ENCODE measurements at regions of chr16 and their contacts with region 1.

Region 1: GRCh38 chr16:50806099-50807062 is 64.5 kb downstream of the CYLD start:
- DNase-seq: peak; percentile 76 to 93 (median 81)
- ATAC-seq: peak; percentile 94
- H3K4me3 ChIP-seq: peak overlapping the region; percentile 37
- H3K4me3 Mint-ChIP-seq: peak overlapping the region; percentile 80
- H3K27ac ChIP-seq: no peak overlapping the region
- H3K27ac Mint-ChIP-seq: peak overlapping the region; percentile 83
- H3K4me1 ChIP-seq: peaks cover 15% of the 10 kb centered on the region
- H3K4me1 Mint-ChIP-seq: peaks cover 13% of the 10 kb centered on the region
- H3K27me3 ChIP-seq: no peaks in the 10 kb centered on the region
- H3K27me3 Mint-ChIP-seq: no peaks in the 10 kb centered on the region
- CTCF ChIP-seq: peak; percentile 99

Region 2: GRCh38 chr16:50065624-50066481 is 740.5 kb before region 1 on chr16 and contains the start of gene HEATR3:
- CTCF ChIA-PET with region 1: interaction called, 7 read pairs
- POLR2A ChIA-PET with region 1: interaction called, 5 read pairs
- intact Hi-C with region 1: loop called in 1 of 2 experiments (anchors 1 kb)
- DNase-seq: peak; percentile 89 to 98 (median 95)
- ATAC-seq: peak; percentile 83
- H3K4me3 ChIP-seq: peak within 1 kb of the TSS; percentile 69
- H3K4me3 Mint-ChIP-seq: peak within 1 kb of the TSS; percentile 99
- H3K27ac ChIP-seq: peak within 1 kb of the TSS; percentile 69 to 85
- H3K27ac Mint-ChIP-seq: peak within 1 kb of the TSS; percentile 83
- H3K4me1 ChIP-seq: peaks cover 25% of the 10 kb centered on the region
- H3K4me1 Mint-ChIP-seq: peaks cover 53% of the 10 kb centered on the region
- H3K27me3 ChIP-seq: no peaks in the 10 kb centered on the region
- H3K27me3 Mint-ChIP-seq: no peaks in the 10 kb centered on the region
- CTCF ChIP-seq: no peak
- total RNA-seq, gene HEATR3: 10.1 to 10.6 TPM

Region 3: GRCh38 chr16:50326949-50327402 is 479.4 kb before region 1 on chr16:
- CTCF ChIA-PET with region 1: interaction called, 8 read pairs
- POLR2A ChIA-PET with region 1: interaction called, 6 read pairs
- intact Hi-C with region 1: loop called in 1 of 2 experiments (anchors 2 kb)
- DNase-seq: peak; percentile 39 to 93 (median 62)
- ATAC-seq: peak; percentile 92
- H3K4me3 ChIP-seq: no peak overlapping the region
- H3K4me3 Mint-ChIP-seq: no peak overlapping the region
- H3K27ac ChIP-seq: peak overlapping the region in 1 of 2 donors; percentile 20
- H3K27ac Mint-ChIP-seq: peak overlapping the region; percentile 84
- H3K4me1 ChIP-seq: peaks cover 38% of the 10 kb centered on the region
- H3K4me1 Mint-ChIP-seq: peaks cover 64% of the 10 kb centered on the region
- H3K27me3 ChIP-seq: no peaks in the 10 kb centered on the region
- H3K27me3 Mint-ChIP-seq: no peaks in the 10 kb centered on the region
- CTCF ChIP-seq: peak; percentile 83

Region 4: DNA sequence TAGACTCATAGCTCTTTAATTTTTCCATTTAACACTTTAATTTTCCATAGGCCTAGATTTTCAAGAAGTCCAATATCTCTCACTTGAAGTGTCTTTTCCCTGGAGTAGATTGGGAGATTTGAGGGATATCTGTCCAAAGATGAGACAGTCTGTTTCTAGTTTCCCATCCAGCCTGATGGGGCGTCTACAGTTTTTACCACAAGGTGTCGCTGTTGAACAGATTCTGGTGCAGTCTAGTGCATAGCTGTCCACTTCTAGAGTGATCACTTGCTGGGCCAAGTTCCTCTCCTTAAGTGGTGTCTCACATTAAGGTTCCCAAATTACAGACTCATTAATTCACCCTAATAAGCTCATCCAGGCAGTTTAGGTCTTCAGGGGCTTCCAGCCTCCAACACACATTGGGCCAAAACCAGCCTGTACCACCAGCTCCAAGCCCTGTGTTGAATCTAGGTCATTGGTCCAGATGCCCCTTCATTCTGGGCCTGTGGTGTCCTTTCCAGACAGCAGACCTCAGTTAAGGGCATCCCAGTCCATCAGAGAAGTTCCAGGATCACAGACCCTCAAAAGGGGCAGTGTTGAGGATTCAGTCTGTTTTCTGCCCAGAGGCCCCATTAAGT is 134.6 kb before region 1 on chr16:
- CTCF ChIA-PET with region 1: interaction called, 62 read pairs
- POLR2A ChIA-PET with region 1: interaction called, 11 read pairs
- intact Hi-C with region 1: loop called (anchors 1 to 2 kb)
- DNase-seq: peak in 11 of 14 experiments; percentile 26 to 76 (median 47)
- ATAC-seq: peak; percentile 25
- H3K4me3 ChIP-seq: no peak overlapping the region
- H3K4me3 Mint-ChIP-seq: peak overlapping the region; percentile 39
- H3K27ac ChIP-seq: no peak overlapping the region
- H3K27ac Mint-ChIP-seq: peak overlapping the region; percentile 74
- H3K4me1 ChIP-seq: peaks cover 31% of the 10 kb centered on the region
- H3K4me1 Mint-ChIP-seq: peaks cover 42% of the 10 kb centered on the region
- H3K27me3 ChIP-seq: no peaks in the 10 kb centered on the region
- H3K27me3 Mint-ChIP-seq: no peaks in the 10 kb centered on the region
- CTCF ChIP-seq: peak; percentile 63

Region 5: DNA sequence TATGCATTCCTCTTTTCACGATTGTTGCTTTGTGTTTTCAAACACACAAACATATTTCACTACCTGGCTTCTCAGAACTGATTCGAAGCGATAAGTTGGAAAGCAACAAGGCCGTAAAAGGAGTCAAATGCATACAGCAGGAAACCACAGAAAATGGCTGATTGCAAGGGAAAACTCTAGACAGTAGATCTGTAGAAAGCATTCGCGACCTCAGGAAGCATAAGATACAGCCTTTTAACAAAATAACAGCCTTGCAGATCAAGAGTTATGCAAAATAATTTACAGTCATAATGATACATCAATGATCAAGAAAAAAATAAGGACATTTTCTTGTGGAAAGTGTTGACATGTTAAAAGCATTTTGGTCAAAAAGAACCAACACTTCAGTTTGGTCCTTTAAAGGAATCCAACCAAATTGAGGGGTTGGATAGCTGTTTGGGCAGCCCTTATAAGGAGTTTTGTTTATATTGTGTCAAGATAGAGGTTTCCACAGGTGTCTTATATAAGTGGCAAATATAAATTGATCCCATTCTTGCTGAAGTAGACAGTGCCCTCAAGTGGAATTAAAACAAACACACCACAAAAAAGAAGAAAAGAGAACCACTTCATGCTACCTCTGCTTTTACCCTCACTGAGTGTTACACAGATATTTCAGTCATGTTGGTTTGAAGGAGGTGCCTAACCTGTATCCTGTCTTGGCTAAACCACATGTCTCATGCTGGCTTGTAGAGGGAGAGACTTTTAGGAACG is 59.0 kb before region 1 on chr16:
- CTCF ChIA-PET with region 1: interaction called, 15 read pairs
- POLR2A ChIA-PET with region 1: interaction called, 9 read pairs
- intact Hi-C with region 1: loop called in 1 of 2 experiments (anchors 2 kb)
- DNase-seq: peak in 5 of 14 experiments; percentile 14 to 86 (median 78)
- ATAC-seq: peak; percentile 72
- H3K4me3 ChIP-seq: peak overlapping the region; percentile 80
- H3K4me3 Mint-ChIP-seq: peak overlapping the region; percentile 86
- H3K27ac ChIP-seq: peak overlapping the region; percentile 38 to 66
- H3K27ac Mint-ChIP-seq: peak overlapping the region; percentile 87
- H3K4me1 ChIP-seq: peaks cover 23% of the 10 kb centered on the region
- H3K4me1 Mint-ChIP-seq: peaks cover 80% of the 10 kb centered on the region
- H3K27me3 ChIP-seq: no peaks in the 10 kb centered on the region
- H3K27me3 Mint-ChIP-seq: no peaks in the 10 kb centered on the region
- CTCF ChIP-seq: peak; percentile 72

Region 6: DNA sequence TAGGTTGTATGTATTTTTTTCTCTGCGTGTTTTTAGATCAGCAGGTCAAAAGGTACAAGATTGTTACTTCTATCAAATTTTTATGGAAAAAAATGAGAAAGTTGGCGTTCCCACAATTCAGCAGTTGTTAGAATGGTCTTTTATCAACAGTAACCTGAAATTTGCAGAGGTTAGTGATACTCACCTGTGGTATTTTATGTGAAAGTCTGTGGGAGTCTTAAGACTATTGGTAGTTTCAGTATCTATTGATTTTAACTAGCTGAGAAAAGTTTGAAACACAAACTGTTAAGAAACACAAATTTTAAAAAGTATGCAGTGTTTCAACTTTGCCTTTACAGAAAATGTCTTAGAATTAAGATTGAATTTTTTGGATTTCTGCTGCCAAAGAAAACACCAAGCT is 14.9 kb before region 1 on chr16:
- CTCF ChIA-PET with region 1: interaction called, 33 read pairs
- POLR2A ChIA-PET with region 1: no interaction called
- intact Hi-C with region 1: no loop called
- DNase-seq: no peak
- ATAC-seq: no peak
- H3K4me3 ChIP-seq: no peak overlapping the region
- H3K4me3 Mint-ChIP-seq: no peak overlapping the region
- H3K27ac ChIP-seq: no peak overlapping the region
- H3K27ac Mint-ChIP-seq: peak overlapping the region; percentile 17
- H3K4me1 ChIP-seq: no peaks in the 10 kb centered on the region
- H3K4me1 Mint-ChIP-seq: peaks cover 24% of the 10 kb centered on the region
- H3K27me3 ChIP-seq: no peaks in the 10 kb centered on the region
- H3K27me3 Mint-ChIP-seq: no peaks in the 10 kb centered on the region
- CTCF ChIP-seq: no peak

Region 7: GRCh38 chr16:50902457-50902856 is 96.1 kb after region 1 on chr16:
- CTCF ChIA-PET with region 1: no interaction called
- POLR2A ChIA-PET with region 1: no interaction called
- intact Hi-C with region 1: no loop called
- DNase-seq: no peak
- ATAC-seq: no peak
- H3K4me3 ChIP-seq: no peak overlapping the region
- H3K4me3 Mint-ChIP-seq: no peak overlapping the region
- H3K27ac ChIP-seq: no peak overlapping the region
- H3K27ac Mint-ChIP-seq: no peak overlapping the region
- H3K4me1 ChIP-seq: no peaks in the 10 kb centered on the region
- H3K4me1 Mint-ChIP-seq: no peaks in the 10 kb centered on the region
- H3K27me3 ChIP-seq: peaks cover 0 to 2% of the 10 kb centered on the region in 2 experiments
- H3K27me3 Mint-ChIP-seq: peaks cover 44% of the 10 kb centered on the region
- CTCF ChIP-seq: no peak

Region 8: GRCh38 chr16:51095084-51095881 is 288.9 kb after region 1 on chr16:
- CTCF ChIA-PET with region 1: no interaction called
- POLR2A ChIA-PET with region 1: no interaction called
- intact Hi-C with region 1: no loop called
- DNase-seq: no peak
- ATAC-seq: no peak
- H3K4me3 ChIP-seq: no peak overlapping the region
- H3K4me3 Mint-ChIP-seq: no peak overlapping the region
- H3K27ac ChIP-seq: no peak overlapping the region
- H3K27ac Mint-ChIP-seq: no peak overlapping the region
- H3K4me1 ChIP-seq: no peaks in the 10 kb centered on the region
- H3K4me1 Mint-ChIP-seq: no peaks in the 10 kb centered on the region
- H3K27me3 ChIP-seq: no peaks in the 10 kb centered on the region
- H3K27me3 Mint-ChIP-seq: no peaks in the 10 kb centered on the region
- CTCF ChIP-seq: no peak